CD4-positive, alpha-beta memory T cell (primary cell): ENCODE measurements at regions of chr19 and their contacts with region 1.

Region 1: DNA sequence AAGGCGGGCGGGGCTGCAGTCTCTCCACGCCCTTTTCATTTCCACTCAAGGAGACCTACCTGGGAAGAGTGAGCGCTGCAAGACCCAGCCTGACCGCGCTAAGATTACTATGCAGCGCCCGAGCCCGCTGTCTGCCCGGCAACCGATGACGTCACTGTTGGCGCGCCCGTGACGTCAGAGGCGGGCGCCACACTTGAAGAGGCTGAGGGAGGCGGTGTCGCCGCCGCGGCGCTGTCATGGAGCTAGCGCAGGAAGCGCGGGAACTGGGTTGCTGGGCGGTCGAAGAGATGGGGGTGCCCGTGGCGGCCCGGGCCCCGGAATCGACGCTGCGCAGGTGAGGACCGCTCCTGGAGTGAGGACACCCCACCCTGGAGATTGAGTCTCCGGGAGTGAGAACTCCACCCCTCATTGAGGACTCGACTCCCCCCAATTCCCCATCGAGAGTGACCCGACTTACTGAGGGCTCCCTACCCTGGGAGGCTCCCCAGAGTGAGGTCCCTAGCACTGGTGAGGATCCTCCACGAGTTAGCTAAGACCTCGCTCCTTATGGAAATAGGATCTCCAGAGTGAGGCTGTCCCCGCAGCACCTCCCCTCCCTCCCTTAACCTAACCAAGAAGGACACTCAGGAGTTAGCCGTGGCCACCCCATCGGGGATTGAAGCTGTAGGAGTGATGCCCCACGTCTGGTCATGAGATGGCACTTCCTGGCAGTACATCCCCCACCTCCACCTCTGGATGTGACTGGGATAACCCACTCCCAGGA is at the start of gene HAUS5:
- DNase-seq: peak; percentile 91 to 96 (median 94)
- H3K4me3 ChIP-seq: peak within 1 kb of the TSS; percentile 74 to 89
- H3K4me3 Mint-ChIP-seq: peak within 1 kb of the TSS; percentile 82 to 96 (median 86)
- H3K27ac ChIP-seq: peak within 1 kb of the TSS; percentile 72
- H3K27ac Mint-ChIP-seq: peak within 1 kb of the TSS; percentile 85 to 98 (median 95)
- H3K4me1 ChIP-seq: peaks cover 39% of the 10 kb centered on the region
- H3K4me1 Mint-ChIP-seq: peaks cover 17 to 53% (median 28%) of the 10 kb centered on the region in 4 donors
- H3K27me3 ChIP-seq: no peaks in the 10 kb centered on the region
- H3K27me3 Mint-ChIP-seq: no peaks in the 10 kb centered on the region
- total RNA-seq, gene HAUS5: 28.2 to 29.3 TPM

Region 2: DNA sequence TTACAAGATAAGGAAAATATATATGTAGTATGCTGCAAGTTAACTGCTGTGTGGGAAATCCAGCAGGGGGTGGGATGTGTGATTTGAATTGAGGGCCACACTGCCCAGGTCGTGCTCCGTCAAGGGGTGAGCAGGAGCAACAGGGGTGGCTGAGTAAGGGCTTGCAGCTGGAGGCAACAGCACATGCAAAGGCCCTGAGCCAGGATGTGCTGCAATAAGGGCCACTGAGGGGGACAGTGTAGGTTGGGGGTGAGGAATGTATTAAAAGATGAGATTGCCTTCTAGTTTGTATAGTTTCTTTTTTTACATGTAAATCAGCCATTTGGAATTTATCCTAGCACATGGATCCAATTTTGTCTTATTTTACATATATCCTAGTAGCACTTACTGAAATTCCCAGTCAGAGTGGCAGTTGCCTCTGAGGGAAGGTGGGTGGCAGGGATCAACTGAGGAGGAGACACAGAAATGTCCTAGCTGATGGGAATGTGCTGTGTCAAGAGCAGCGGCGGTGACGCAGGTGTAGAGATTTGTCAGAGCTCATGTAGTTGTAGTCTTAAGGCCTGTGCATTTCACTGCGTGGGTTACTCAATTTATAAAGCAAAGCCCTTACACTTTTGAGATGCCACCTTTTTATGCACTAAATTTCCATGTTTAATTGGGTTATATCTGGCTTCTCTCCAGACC is 10.7 kb after region 1 on chr19:
- CTCF ChIA-PET with region 1: no interaction called
- POLR2A ChIA-PET with region 1: interaction called, 10 read pairs
- intact Hi-C with region 1: loop called (anchors 1 kb)
- DNase-seq: no peak
- H3K4me3 ChIP-seq: no peak overlapping the region
- H3K4me3 Mint-ChIP-seq: no peak overlapping the region
- H3K27ac ChIP-seq: no peak overlapping the region
- H3K27ac Mint-ChIP-seq: peak overlapping the region in 2 of 7 donors; percentile 42 to 58
- H3K4me1 ChIP-seq: peaks cover 5% of the 10 kb centered on the region
- H3K4me1 Mint-ChIP-seq: peaks cover 4 to 12% (median 6%) of the 10 kb centered on the region in 4 donors
- H3K27me3 ChIP-seq: no peaks in the 10 kb centered on the region
- H3K27me3 Mint-ChIP-seq: no peaks in the 10 kb centered on the region

Region 3: GRCh38 chr19:35628565-35629331 is 16.0 kb after region 1 on chr19 and contains the start of gene RBM42:
- CTCF ChIA-PET with region 1: no interaction called
- POLR2A ChIA-PET with region 1: interaction called, 10 read pairs
- intact Hi-C with region 1: loop called (anchors 1 kb)
- DNase-seq: peak; percentile 96 to 98 (median 97)
- H3K4me3 ChIP-seq: peak within 1 kb of the TSS; percentile 27 to 86
- H3K4me3 Mint-ChIP-seq: peak within 1 kb of the TSS; percentile 97 to 100 (median 98)
- H3K27ac ChIP-seq: peak within 1 kb of the TSS; percentile 88
- H3K27ac Mint-ChIP-seq: peak within 1 kb of the TSS; percentile 95 to 100 (median 100)
- H3K4me1 ChIP-seq: peaks cover 17% of the 10 kb centered on the region
- H3K4me1 Mint-ChIP-seq: peaks cover 13 to 35% (median 19%) of the 10 kb centered on the region in 4 donors
- H3K27me3 ChIP-seq: no peaks in the 10 kb centered on the region
- H3K27me3 Mint-ChIP-seq: peaks cover 0 to 1% of the 10 kb centered on the region in 2 donors
- total RNA-seq, gene RBM42: 53.0 to 55.8 TPM

Region 4: GRCh38 chr19:35648017-35648961 is 35.5 kb after region 1 on chr19 and contains the start of gene COX6B1:
- CTCF ChIA-PET with region 1: interaction called, 7 read pairs
- POLR2A ChIA-PET with region 1: interaction called, 51 read pairs
- intact Hi-C with region 1: loop called (anchors 1 kb)
- DNase-seq: peak; percentile 90 to 98 (median 93)
- H3K4me3 ChIP-seq: peak within 1 kb of the TSS; percentile 72 to 93
- H3K4me3 Mint-ChIP-seq: peak within 1 kb of the TSS; percentile 93 to 99 (median 98)
- H3K27ac ChIP-seq: peak within 1 kb of the TSS; percentile 86
- H3K27ac Mint-ChIP-seq: peak within 1 kb of the TSS; percentile 95 to 99 (median 97)
- H3K4me1 ChIP-seq: peaks cover 41% of the 10 kb centered on the region
- H3K4me1 Mint-ChIP-seq: peaks cover 28 to 52% (median 41%) of the 10 kb centered on the region in 4 donors
- H3K27me3 ChIP-seq: no peaks in the 10 kb centered on the region
- H3K27me3 Mint-ChIP-seq: no peaks in the 10 kb centered on the region
- total RNA-seq, gene COX6B1: 212 to 250 TPM